H1 (cell line): ENCODE measurements at regions of chr11 and their contacts with region 1.

Region 1: GRCh38 chr11:128917144-128917724 is 25.4 kb downstream of the TP53AIP1 start:
- DNase-seq: no peak
- H3K4me3 ChIP-seq: no peak overlapping the region
- H3K27ac ChIP-seq: no peak overlapping the region
- H3K4me1 ChIP-seq: no peaks in the 10 kb centered on the region; a peak in 1 of 7 replicates
- H3K27me3 ChIP-seq: peaks cover 0 to 3% (median under 1%) of the 10 kb centered on the region in 4 experiments; a peak in 2 of 7 replicates
- CTCF ChIP-seq: no peak
- EP300 ChIP-seq: no peak
- POLR2A ChIP-seq: no peak
- RAD21 ChIP-seq: no peak

Region 2: GRCh38 chr11:128948589-128948988 is 31.4 kb after region 1 on chr11:
- CTCF ChIA-PET with region 1: interaction called, 12 read pairs
- POLR2A ChIA-PET with region 1: no interaction called
- DNase-seq: no peak
- H3K4me3 ChIP-seq: no peak overlapping the region
- H3K27ac ChIP-seq: no peak overlapping the region
- H3K4me1 ChIP-seq: no peaks in the 10 kb centered on the region
- H3K27me3 ChIP-seq: peaks cover 0 to 2% (median 0%) of the 10 kb centered on the region in 4 experiments; a peak in 3 of 7 replicates
- CTCF ChIP-seq: peak; percentile 67 to 73 (median 71)
- EP300 ChIP-seq: no peak
- POLR2A ChIP-seq: no peak
- RAD21 ChIP-seq: peak; percentile 73 to 79